ENCODE measurements at regions of chr4 and their contacts with region 1.

Region 1: GRCh38 chr4:54322818-54323417 is 93.8 kb downstream of the PDGFRA start:
- DNase-seq: peak; percentile 70
- H3K4me3 ChIP-seq: no peak overlapping the region
- H3K27ac ChIP-seq: no peak overlapping the region
- H3K4me1 ChIP-seq: no peaks in the 10 kb centered on the region
- H3K27me3 ChIP-seq: no peaks in the 10 kb centered on the region
- CTCF ChIP-seq: peak; percentile 67

Region 2: DNA sequence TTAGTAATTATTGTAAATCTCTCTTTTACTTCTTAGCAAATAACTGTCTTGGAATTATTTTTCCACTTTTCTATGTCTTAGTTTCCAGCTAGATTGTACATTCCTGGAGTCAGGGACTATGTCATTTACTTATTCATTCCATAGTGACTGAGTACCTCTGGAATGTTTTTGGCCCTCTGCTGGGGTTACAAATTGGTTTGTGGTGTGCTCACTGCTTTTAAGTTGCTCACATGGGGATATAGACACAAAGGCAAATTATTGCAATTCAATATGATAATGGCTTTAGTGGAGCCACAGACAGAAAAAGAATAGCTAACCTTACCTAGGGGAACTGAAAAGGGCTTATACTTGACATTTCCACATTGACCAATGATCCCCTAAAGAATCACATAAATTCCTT is 157.5 kb before region 1 on chr4:
- intact Hi-C with region 1: no loop called
- DNase-seq: no peak
- H3K4me3 ChIP-seq: no peak overlapping the region
- H3K27ac ChIP-seq: no peak overlapping the region
- H3K4me1 ChIP-seq: no peaks in the 10 kb centered on the region
- H3K27me3 ChIP-seq: no peaks in the 10 kb centered on the region
- CTCF ChIP-seq: no peak

Region 3: DNA sequence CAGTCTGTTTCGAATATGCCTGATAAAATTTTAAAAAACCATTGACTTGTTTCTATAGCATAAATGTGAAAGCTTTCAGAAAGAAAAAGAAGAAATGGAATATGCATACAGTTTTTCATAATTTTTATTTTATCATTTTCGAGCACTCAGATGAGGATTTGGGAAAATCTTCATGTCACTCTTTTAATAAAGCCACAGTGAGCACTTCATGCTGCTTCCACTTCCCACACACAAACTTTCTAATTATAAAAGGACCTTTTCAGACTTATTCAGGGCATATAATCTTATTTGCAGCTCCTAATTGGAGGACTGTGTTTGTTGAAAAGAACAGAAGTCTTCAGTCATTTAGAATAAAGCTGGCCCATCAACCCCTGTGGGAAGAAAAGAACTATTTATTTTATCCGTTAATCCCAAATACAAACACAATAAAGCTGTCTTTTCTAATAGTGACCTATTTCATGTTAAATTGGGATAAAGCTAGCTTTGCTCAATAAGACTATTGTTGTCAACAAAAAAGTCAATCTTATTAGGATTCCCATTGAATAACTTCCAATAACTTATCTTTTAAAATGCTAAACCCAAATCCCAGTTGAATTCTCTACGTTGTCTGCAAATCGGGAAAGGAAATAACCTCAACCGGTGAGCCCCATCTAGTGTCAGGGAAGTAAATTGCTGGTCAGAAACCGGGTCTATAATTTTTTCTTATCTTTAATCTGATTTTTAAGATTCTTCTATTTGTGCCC is 117.6 kb after region 1 on chr4:
- intact Hi-C with region 1: loop called (anchors 5 kb)
- DNase-seq: peak; percentile 23
- H3K4me3 ChIP-seq: no peak overlapping the region
- H3K27ac ChIP-seq: no peak overlapping the region
- H3K4me1 ChIP-seq: no peaks in the 10 kb centered on the region
- H3K27me3 ChIP-seq: no peaks in the 10 kb centered on the region
- CTCF ChIP-seq: peak; percentile 44

Region 4: DNA sequence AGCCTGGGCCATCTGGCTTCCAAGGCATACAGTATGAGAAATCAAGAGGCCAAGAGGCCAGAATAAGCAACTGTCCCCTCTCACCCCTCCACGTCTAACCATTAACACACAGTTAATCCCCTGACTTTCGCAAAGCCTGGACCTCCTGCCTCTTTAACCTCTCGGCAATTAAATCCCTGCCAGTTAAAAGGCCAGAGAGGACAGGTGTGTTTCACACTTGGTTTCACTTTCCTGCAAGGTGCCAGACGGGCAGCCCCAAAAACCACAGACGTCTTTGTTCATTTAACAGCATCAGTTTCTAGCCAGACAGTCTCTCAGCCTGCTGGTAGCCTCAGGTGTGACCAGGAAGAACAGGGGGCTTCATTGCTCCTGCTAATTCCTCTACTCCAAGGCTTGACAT is 243.7 kb after region 1 on chr4:
- intact Hi-C with region 1: no loop called
- DNase-seq: no peak
- H3K4me3 ChIP-seq: no peak overlapping the region
- H3K27ac ChIP-seq: no peak overlapping the region
- H3K4me1 ChIP-seq: no peaks in the 10 kb centered on the region
- H3K27me3 ChIP-seq: no peaks in the 10 kb centered on the region
- CTCF ChIP-seq: no peak

Region 5: DNA sequence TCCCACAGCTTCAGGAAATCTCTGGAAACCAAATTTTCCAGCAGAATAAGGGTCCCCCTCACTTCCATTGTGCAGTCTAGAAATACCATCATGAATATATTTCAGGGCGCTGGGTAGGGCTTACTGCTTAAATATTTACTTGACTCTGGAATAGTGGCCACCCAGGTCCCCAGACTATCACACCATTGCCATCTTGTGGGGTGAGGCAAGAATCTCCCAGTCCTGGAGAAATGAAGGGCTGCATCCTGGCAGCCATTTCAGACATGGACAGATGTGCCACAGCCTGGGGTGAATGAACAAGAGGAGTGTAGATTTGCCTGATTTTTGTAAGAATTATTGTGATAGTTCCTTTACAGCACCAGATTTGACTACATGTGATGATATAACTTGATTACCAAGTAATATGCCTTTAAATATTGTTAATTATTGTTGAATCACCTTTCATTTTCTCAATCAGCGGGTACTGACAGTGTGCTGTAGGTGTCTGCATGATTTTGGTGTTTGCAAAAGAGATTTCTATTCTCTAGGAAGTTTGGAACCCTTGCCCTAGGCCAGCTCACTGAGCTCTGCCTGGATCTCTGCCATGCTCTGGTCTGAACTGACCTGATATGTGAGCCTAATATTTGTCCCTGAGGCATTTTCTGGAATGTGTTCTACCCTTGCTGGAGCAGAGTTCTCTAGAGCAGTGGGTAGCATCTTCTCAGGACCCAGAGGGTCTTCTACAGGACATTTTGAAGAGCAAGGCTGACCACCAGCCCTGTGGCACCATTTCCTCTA is 518.3 kb after region 1 on chr4:
- intact Hi-C with region 1: loop called (anchors 10 kb)
- DNase-seq: peak; percentile 18
- H3K4me3 ChIP-seq: no peak overlapping the region
- H3K27ac ChIP-seq: no peak overlapping the region
- H3K4me1 ChIP-seq: no peaks in the 10 kb centered on the region
- H3K27me3 ChIP-seq: no peaks in the 10 kb centered on the region
- CTCF ChIP-seq: no peak

Region 6: GRCh38 chr4:54961357-54961975 is 638.5 kb after region 1 on chr4:
- intact Hi-C with region 1: loop called (anchors 5 kb)
- DNase-seq: no peak
- H3K4me3 ChIP-seq: no peak overlapping the region
- H3K27ac ChIP-seq: no peak overlapping the region
- H3K4me1 ChIP-seq: no peaks in the 10 kb centered on the region
- H3K27me3 ChIP-seq: no peaks in the 10 kb centered on the region
- CTCF ChIP-seq: peak; percentile 13

Region 7: DNA sequence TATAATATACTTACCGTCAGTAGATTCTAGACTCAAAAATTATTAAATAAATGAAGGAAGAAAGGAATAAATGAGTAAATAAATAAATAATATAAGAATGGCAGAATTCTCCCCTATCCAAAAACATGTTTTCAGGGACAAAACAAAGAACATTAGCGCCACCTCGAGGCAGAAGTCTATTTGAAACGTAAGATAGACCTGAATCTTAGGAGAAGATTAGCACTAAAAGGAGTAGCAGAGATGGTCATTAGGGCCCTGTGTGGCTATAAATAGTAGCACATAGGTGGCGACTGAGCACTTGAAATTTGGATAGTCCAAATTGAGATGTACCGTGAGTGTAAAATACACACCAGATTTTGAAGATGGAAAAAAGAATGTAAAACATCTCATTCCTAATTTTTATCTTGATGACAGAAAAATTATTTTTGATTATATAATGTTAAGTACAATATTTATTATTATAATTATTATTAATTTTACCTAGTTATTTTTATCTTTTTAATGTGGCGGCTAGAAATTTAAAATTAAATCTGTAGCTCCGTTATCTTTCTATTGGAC is 998.9 kb after region 1 on chr4:
- intact Hi-C with region 1: loop called (anchors 5 kb)
- DNase-seq: peak; percentile 81
- H3K4me3 ChIP-seq: no peak overlapping the region
- H3K27ac ChIP-seq: no peak overlapping the region
- H3K4me1 ChIP-seq: no peaks in the 10 kb centered on the region
- H3K27me3 ChIP-seq: no peaks in the 10 kb centered on the region
- CTCF ChIP-seq: peak; percentile 44